AG04449 (cell line): ENCODE measurements at regions of chr1 and their contacts with region 1.

Region 1: GRCh38 chr1:44049839-44050238 is 18.6 kb upstream of the SLC6A9 start:
- DNase-seq: peak; percentile 91
- H3K4me3 ChIP-seq: no peak overlapping the region
- CTCF ChIP-seq: no peak

Region 2: GRCh38 chr1:43974443-43975248 is 75.2 kb before region 1 on chr1 and contains the start of gene ATP6V0B:
- CTCF ChIA-PET with region 1: interaction called, 10 read pairs
- POLR2A ChIA-PET with region 1: interaction called, 5 read pairs
- DNase-seq: peak; percentile 28
- H3K4me3 ChIP-seq: peak within 1 kb of the TSS; percentile 85
- CTCF ChIP-seq: peak; percentile 36

Region 3: GRCh38 chr1:44012941-44013609 is 36.8 kb before region 1 on chr1:
- CTCF ChIA-PET with region 1: interaction called, 313 read pairs
- POLR2A ChIA-PET with region 1: no interaction called
- DNase-seq: no peak
- H3K4me3 ChIP-seq: no peak overlapping the region
- CTCF ChIP-seq: no peak

Region 4: DNA sequence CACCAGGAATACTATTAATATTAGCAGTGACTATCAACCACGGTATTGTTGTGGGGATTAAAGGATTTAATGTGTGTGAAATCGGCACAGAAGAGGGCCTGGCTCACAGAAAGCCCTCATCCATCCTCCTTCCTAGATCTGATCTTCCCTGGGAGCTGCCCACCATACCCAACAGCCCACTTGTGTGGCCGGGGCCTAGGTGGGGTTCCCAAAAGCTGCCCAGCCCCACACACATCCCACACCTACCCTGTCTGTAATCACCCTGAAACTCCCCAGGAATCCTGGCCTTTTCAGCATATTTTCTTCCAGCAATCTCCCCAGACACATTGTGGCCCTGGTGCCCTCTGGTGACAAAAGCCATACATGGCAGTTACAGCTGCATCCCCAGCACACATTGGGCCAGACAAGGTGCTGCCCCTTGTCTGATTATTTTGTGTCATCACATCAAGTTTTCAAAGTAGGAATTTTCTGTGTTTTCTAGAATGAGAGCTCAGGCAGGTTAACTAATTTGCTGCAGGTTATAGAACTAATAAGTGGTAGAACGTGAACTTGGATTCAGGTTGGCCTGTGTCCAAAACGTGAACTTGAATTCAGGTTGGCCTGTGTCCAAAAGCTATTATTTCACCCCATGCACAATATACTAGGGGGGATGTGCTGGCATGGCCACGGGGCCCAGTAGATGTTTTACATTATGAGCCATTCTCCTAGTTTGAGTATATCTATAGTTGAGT is 13.3 kb before region 1 on chr1:
- CTCF ChIA-PET with region 1: interaction called, 128 read pairs
- POLR2A ChIA-PET with region 1: interaction called, 10 read pairs
- DNase-seq: no peak
- H3K4me3 ChIP-seq: no peak overlapping the region
- CTCF ChIP-seq: peak; percentile 78

Region 5: GRCh38 chr1:44652445-44653106 is 602.7 kb after region 1 on chr1:
- CTCF ChIA-PET with region 1: interaction called, 12 read pairs
- POLR2A ChIA-PET with region 1: no interaction called
- DNase-seq: no peak
- H3K4me3 ChIP-seq: no peak overlapping the region
- CTCF ChIP-seq: peak; percentile 98